CD14-positive monocyte (primary cell): ENCODE measurements at regions of chr3 and their contacts with region 1.

Region 1: DNA sequence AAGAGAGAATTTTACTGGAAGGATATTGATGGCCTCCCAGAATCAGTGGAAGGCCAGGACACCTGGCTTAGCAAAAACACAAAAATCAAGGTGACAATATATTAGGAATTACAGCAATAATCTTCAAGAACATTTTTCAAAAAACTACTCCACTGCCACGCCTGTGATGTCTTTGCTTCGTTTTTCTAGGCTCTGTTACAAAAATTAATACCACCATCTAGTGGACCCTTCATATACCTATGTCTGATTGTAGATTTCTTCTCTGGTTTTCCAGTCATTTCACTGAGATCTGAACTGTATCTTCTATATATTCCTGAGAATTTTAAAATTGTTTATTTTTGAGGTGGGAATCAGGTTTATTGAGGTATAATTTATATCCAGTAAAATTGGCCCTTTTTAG is 5.6 kb upstream of the SLC33A1 start:
- DNase-seq: no peak
- H3K4me3 ChIP-seq: no peak overlapping the region
- H3K4me3 Mint-ChIP-seq: no peak overlapping the region
- H3K27ac ChIP-seq: no peak overlapping the region
- H3K27ac Mint-ChIP-seq: peak overlapping the region in 1 of 7 donors; percentile 25
- H3K4me1 ChIP-seq: peaks cover 5 to 6% of the 10 kb centered on the region in 2 donors
- H3K4me1 Mint-ChIP-seq: peaks cover 16% of the 10 kb centered on the region
- H3K27me3 ChIP-seq: no peaks in the 10 kb centered on the region
- H3K27me3 Mint-ChIP-seq: peaks cover 0 to 2% (median 1%) of the 10 kb centered on the region in 3 donors
- CTCF ChIP-seq: no peak

Region 2: DNA sequence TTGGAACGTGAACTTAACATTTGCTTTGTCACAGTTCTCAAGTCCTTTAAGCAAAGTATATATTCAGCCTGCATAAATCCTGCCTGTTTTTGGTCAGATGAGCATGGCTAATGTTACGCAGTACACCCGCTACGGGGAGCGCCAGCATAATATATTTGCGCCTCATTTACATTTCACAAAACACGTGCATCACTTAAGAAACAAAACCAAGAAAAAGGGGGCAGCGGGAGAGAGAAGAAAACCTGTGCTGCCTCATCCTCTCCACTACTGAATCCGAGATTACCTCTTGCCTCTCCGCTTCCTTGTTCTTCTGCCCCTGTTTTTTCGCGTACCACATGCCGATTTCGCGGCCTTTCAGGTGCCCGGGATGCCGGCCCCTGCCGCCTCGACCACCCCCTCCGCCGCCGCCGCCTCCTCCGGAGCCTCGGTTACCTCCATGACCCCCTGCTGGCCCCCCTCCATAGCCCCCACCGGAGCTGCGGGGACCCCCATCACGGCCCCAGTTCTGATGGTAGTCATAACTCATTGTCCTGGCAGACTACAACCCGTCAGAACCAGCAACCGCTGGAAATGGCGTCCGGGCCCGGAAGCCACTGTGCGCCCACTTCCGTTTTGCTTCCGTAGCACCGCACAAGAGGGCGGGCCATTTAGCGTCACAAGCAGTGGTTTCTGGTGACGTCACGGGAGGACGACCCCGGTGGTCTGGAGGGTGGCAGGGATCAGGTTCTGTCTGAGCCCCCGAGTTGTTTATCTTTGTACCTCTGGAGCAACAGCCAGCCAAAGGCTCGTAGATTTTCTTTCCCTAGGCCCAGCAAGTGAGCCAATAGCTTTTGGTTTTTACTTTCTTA is 1535.7 kb before region 1 on chr3 and contains the start of gene DHX36:
- intact Hi-C with region 1: loop called in 1 of 2 experiments (anchors 10 kb)
- DNase-seq: peak; percentile 86 to 92 (median 91)
- H3K4me3 ChIP-seq: peak within 1 kb of the TSS; percentile 67 to 99 (median 92)
- H3K4me3 Mint-ChIP-seq: peak within 1 kb of the TSS; percentile 86 to 97
- H3K27ac ChIP-seq: peak within 1 kb of the TSS; percentile 86 to 96
- H3K27ac Mint-ChIP-seq: peak within 1 kb of the TSS; percentile 96 to 99 (median 99)
- H3K4me1 ChIP-seq: peaks cover 22 to 27% of the 10 kb centered on the region in 2 donors
- H3K4me1 Mint-ChIP-seq: peaks cover 24% of the 10 kb centered on the region
- H3K27me3 ChIP-seq: no peaks in the 10 kb centered on the region
- H3K27me3 Mint-ChIP-seq: peaks cover 0 to 3% (median 2%) of the 10 kb centered on the region in 3 donors
- CTCF ChIP-seq: no peak
- polyA plus RNA-seq, gene DHX36: 4.7 to 31.5 (median 5.7) TPM